Sigmoid colon (tissue), 7 donors: ENCODE measurements at regions of chr22 and their contacts with region 1.

Region 1: DNA sequence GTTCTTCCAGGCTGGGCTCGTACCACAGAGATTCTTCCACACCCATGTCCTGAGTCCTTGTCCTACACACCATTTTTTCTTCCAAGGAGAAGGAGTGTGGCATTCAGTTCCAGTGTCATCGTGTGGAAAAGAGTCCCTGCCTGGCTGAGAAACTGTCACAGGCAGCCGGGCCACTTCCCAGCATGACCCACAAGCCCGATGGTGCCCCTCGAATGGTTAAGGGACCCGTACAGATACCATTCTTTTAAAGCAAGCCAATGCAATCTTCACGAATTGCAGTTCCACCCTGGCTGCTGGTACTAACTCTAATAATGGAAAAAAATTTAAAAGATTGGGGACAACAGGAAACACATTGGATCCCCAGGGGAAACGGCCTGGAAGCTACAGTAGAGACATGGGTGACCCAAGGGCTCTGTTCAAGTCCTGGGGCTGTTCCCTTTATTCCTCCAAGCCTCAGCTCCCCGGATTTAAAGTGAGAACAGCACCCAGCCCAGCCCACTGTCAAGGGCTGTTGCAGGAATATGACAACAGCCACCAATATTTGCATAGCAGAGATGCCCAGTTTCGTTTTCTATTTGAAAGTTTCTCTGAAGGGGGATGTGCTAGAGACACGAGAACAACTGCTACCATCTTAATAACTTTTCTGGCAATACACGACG is 80.9 kb upstream of the WNT7B start:
- DNase-seq: peak; percentile 69
- H3K4me3 ChIP-seq: peak overlapping the region; percentile 3 to 86 (median 82)
- H3K27ac ChIP-seq: peak overlapping the region; percentile 94 to 100 (median 100)
- H3K4me1 ChIP-seq: peaks cover 0 to 87% (median 85%) of the 10 kb centered on the region in 4 donors
- H3K27me3 ChIP-seq: no peaks in the 10 kb centered on the region
- CTCF ChIP-seq: no peak
- EP300 ChIP-seq: no peak
- POLR2A ChIP-seq: no peak

Region 2: DNA sequence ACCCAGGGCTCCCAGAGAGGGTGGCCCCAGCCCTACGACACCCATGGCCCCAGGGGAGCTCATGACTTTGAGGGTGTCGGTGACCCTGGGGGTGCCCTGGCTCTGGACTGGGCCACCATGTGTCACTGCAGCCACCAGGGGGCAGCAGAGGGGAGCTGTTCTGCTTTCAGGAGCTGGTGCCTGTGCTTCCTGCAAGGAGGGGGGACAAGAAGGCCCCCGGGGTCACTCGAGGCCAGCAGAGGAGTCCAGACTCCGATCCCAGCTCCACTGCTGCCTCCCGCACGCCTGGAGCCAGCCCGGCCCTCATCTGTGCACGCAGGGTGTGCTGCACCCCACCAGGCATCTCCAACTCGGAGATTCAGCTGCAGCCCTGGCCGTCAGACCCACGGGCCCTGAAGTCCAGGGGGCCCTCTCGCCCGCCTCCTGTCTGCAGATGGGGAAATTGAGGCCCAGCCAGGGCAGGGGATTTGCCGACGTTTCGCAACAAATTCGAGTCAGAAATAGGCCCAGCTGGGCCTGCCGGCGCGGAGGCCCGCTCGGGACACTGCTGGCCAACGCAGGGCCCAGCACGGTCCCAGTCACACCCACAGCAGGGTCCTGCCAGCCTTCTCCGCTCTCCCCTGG is 51.4 kb before region 1 on chr22:
- intact Hi-C with region 1: loop called (anchors 2 kb)
- DNase-seq: peak; percentile 98
- H3K4me3 ChIP-seq: peak overlapping the region in 2 of 4 donors; percentile 10 to 17
- H3K27ac ChIP-seq: peak overlapping the region; percentile 91 to 99 (median 96)
- H3K4me1 ChIP-seq: peaks cover 0 to 33% (median 27%) of the 10 kb centered on the region in 4 donors
- H3K27me3 ChIP-seq: no peaks in the 10 kb centered on the region
- CTCF ChIP-seq: peak; percentile 96 to 98 (median 97)
- EP300 ChIP-seq: no peak
- POLR2A ChIP-seq: no peak

Region 3: GRCh38 chr22:46071451-46072109 is 13.7 kb after region 1 on chr22:
- intact Hi-C with region 1: loop called (anchors 2 kb)
- DNase-seq: peak; percentile 97
- H3K4me3 ChIP-seq: peak overlapping the region; percentile 73 to 88 (median 77)
- H3K27ac ChIP-seq: peak overlapping the region; percentile 96 to 99 (median 98)
- H3K4me1 ChIP-seq: peaks cover 0 to 61% (median 50%) of the 10 kb centered on the region in 4 donors
- H3K27me3 ChIP-seq: no peaks in the 10 kb centered on the region
- CTCF ChIP-seq: no peak
- EP300 ChIP-seq: peak in 1 of 4 donors; percentile 5
- POLR2A ChIP-seq: no peak